CD8-positive, alpha-beta T cell (primary cell): ENCODE measurements at regions of chr11 and their contacts with region 1.

Region 1: DNA sequence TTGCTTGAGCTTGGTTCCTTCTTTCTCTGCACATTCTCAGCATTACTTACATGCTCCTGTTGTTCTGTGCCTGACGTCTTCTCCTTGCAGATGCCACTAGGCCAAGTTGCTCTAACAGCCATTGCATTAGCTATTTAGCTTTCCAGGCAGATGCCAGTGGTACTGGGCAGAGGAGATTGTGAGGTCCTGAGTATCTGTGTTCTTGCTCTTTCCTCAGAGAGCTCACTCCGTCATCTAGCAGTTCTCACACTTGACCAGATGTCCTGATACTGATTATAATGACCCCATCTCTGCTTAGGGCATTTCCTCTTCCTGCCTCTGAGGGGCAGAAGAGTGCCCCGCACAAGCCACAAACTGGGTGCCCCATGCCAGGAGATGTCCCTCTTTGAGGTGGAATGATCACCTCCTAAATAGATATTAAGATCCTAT is 30.7 kb downstream of the ARHGAP1 start:
- DNase-seq: peak in 1 of 9 experiments; percentile 30
- ATAC-seq: no peak
- H3K4me3 ChIP-seq: no peak overlapping the region
- H3K4me3 Mint-ChIP-seq: peak overlapping the region; percentile 15
- H3K27ac ChIP-seq: peak overlapping the region in 1 of 2 experiments; percentile 61
- H3K27ac Mint-ChIP-seq: peak overlapping the region; percentile 29
- H3K4me1 ChIP-seq: peaks cover 58% of the 10 kb centered on the region
- H3K4me1 Mint-ChIP-seq: peaks cover 54% of the 10 kb centered on the region
- H3K27me3 ChIP-seq: no peaks in the 10 kb centered on the region
- H3K27me3 Mint-ChIP-seq: no peaks in the 10 kb centered on the region
- CTCF ChIP-seq: no peak

Region 2: DNA sequence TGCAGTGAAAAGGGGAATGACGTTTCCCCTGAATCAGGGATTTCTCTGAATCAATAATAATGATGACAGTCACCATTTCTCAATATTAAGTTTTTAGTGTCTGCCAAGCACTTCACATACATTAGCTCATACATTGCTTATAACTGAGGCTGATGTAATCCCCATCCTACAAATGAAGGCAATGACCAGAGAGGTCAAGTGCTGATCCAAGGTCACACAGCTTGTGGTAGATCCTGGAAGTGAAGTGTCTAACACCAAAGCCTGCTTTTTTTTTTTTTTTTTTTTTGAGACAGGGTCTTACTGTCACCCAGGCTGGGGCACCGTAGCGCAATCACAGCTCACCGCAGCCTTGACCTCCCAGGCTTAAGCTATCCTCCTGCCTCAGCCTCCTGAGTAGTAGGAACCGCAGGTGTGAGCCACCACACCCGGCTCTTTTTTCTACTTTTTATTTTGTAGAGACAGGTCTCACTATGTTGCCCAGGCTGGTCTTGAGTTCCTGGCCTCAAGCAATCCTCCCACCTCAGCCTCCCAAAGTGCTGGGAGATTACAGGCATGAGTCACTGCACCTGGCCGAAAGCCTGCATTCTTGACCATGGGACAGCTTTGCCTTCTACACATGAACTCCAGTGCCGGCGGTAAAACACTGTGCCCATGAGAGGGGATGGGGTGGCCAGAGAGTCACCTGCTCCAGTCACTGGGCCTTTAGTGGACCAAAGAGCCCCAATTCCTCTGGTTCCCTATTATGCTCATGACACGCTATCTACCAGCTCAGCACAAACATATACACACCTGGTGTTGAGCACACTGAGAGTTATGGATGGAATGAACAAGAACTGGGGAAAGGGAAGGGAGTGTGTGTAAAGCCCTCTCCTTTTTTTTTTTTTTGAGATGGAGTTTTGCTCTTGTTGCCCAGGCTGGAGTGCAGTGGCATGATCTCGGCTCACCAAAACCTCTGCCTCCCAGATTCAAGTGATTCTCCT is 13.3 kb after region 1 on chr11:
- CTCF ChIA-PET with region 1: interaction called, 13 read pairs
- POLR2A ChIA-PET with region 1: interaction called, 8 read pairs
- intact Hi-C with region 1: no loop called
- DNase-seq: no peak
- ATAC-seq: no peak
- H3K4me3 ChIP-seq: no peak overlapping the region
- H3K4me3 Mint-ChIP-seq: no peak overlapping the region
- H3K27ac ChIP-seq: no peak overlapping the region
- H3K27ac Mint-ChIP-seq: no peak overlapping the region
- H3K4me1 ChIP-seq: no peaks in the 10 kb centered on the region
- H3K4me1 Mint-ChIP-seq: peaks cover 7% of the 10 kb centered on the region
- H3K27me3 ChIP-seq: no peaks in the 10 kb centered on the region
- H3K27me3 Mint-ChIP-seq: no peaks in the 10 kb centered on the region
- CTCF ChIP-seq: no peak